Thyroid gland (tissue), 4 donors: ENCODE measurements at regions of chr9 and their contacts with region 1.

Region 1: GRCh38 chr9:99906403-99907207 is at the start of gene STX17:
- DNase-seq: peak; percentile 78
- H3K4me3 ChIP-seq: peak within 1 kb of the TSS; percentile 57 to 88 (median 83)
- H3K27ac ChIP-seq: peak within 1 kb of the TSS; percentile 88 to 99 (median 98)
- H3K4me1 ChIP-seq: peaks cover 9% of the 10 kb centered on the region in 2 donors
- H3K27me3 ChIP-seq: no peaks in the 10 kb centered on the region
- CTCF ChIP-seq: no peak
- POLR2A ChIP-seq: peak; percentile 44 to 84
- total RNA-seq, gene STX17: 43.5 to 66.7 (median 50.8) TPM

Region 2: DNA sequence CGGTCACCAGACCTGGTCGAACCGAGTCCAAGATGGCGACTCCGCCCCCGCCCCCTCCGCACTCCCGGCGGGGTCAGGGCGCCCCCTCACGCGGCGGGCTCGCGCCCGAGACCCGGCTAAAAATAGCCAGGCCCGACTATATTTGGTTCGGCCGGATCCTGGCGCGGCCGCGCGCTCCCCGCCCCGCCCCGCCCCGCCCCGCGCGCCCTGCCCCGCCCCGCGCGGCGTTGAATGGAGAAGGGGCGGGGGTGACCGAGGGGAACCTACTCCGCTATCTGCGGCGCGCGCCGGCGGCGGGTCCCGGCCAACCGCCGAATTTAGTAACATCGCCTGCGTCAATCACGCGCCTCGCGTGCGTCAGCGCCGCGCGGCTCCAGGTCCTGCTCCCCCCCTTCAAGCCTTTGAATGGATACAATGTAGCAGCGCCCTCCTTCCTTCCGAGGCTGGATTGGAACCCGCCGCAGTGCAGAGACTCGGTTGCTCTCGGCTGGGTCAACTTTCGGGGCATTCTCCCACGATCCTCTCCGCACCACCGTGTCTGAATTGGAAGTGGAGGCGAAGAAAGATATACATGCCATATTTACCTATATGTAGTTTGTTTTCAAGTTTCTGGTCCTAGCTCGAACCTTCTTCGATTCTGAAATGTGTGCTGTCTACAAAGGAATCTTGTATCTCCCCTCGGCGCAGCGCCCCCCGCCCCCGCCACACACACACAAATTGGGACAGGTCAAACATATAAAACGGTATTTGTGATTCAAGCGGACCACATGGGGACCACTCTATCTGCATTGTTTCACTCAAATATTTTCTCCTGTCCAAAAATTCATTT is 86.5 kb before region 1 on chr9:
- intact Hi-C with region 1: loop called (anchors 5 kb)
- DNase-seq: peak; percentile 92 to 96
- H3K4me3 ChIP-seq: peak overlapping the region; percentile 76 to 92 (median 92)
- H3K27ac ChIP-seq: peak overlapping the region; percentile 97 to 100 (median 99)
- H3K4me1 ChIP-seq: peaks cover 18 to 23% of the 10 kb centered on the region in 2 donors
- H3K27me3 ChIP-seq: no peaks in the 10 kb centered on the region
- CTCF ChIP-seq: peak in 1 of 6 experiments; percentile 4
- POLR2A ChIP-seq: peak in 1 of 2 donors; percentile 61

Region 3: DNA sequence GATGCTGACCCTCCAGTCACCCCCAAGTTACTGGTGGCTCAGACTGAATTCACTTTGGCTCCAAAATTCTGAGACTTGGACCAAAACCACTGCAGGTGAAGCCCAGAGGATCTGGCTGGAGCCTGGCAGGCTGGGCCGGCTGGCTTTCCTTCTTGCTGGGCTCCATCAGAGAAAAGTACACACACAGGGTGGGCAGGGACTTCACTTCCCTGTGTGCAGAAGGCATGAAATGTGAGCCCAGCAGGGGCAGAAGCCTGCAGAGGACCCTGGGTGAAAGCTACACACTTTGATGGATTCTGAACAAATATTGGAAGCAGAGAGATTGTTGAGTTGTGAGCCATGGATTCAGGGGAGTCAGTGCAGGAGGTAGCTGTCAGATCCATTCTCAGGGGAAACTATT is 66.5 kb before region 1 on chr9:
- intact Hi-C with region 1: no loop called
- DNase-seq: no peak
- H3K4me3 ChIP-seq: no peak overlapping the region
- H3K27ac ChIP-seq: no peak overlapping the region
- H3K4me1 ChIP-seq: no peaks in the 10 kb centered on the region
- H3K27me3 ChIP-seq: no peaks in the 10 kb centered on the region
- CTCF ChIP-seq: no peak
- POLR2A ChIP-seq: no peak

Region 4: DNA sequence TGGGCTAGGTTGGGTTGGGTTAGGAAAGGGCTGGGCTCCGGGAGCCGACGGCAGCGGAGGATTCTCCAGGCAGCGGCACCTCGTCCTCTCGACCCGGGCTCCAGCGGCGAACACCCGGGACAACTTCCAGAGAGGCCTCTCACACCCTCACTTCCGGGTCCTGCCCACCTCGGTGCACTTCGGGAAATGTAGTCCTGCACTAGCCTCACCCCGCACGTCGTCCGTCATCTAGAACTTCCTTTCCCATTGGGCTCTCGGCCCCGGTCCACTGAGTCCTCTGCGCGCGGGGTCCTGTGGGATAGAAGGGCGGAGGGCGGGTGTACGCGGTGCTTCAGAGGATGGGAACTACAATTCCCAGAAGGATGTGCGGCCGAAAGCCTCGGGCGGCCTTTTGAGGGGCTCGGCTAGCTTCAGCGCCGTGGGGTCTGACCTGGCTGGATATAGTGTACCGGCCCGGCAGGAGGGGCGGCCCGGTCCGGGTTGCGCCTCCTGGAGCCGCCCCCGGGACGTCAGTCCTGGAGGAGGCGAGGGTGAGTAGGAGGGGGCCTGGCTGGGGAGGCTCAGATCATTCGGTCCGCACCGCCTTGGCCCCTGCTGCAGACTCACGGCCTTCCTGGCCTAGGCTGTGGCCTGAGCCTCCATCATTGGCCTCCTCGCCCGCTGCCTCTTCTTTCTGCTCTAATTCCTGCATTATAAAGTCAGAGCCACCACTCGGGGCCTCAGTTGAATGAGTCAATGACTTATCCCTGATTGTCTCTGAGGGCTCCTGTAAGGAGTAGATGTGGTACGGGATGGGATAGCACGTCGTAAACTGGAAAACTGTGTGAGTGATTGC is 192.5 kb after region 1 on chr9 and contains the starts of genes ERP44 and INVS:
- intact Hi-C with region 1: loop called (anchors 5 kb)
- DNase-seq: peak; percentile 99 to 100
- H3K4me3 ChIP-seq: peak within 1 kb of the TSS; percentile 70 to 100 (median 82)
- H3K27ac ChIP-seq: peak within 1 kb of the TSS; percentile 74 to 93 (median 88)
- H3K4me1 ChIP-seq: peaks cover 8 to 15% of the 10 kb centered on the region in 2 donors
- H3K27me3 ChIP-seq: no peaks in the 10 kb centered on the region
- CTCF ChIP-seq: no peak
- POLR2A ChIP-seq: peak in 1 of 2 donors; percentile 87
- total RNA-seq, gene ERP44: 23.7 to 36.2 (median 29.0) TPM
- total RNA-seq, gene INVS: 37.0 to 56.6 (median 45.6) TPM